ENCODE measurements at regions of chr10 and their contacts with region 1.

Region 1: DNA sequence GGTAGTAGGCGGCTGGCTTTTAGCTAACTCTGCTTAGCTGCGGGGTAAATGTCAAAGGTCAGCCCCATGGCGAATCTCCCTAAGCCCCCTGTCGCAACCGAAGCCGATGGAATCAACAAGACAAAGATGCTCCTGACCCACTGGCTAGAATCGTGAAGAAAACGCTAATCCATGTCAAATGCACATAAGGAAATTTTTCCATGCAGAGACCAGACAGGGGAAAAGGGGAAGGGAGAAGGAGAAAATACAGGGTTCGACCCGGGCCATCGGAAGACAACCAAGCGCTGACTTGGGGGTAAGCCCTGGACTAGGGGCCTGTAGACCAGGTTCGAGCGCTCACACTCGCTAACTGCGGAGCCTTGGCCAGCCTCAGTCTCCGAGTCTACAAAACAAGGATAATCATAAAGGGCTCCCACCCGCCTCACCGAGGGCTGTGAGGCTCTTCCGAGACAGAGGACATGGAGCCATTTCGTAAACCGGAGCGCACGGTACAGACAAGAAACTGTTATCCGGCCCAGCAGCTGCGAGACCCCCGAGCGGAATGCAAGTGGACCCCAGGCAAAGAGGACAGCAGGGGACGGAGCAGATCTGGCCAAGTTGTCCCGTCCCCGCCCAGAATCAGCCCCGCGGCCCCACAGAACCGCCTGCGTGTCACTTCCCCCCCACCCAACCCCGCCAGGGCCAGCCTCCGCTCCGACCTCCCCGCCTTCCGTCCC is 507 bp downstream of the SAR1A start:
- DNase-seq: peak; percentile 38
- ATAC-seq: peak; percentile 11
- H3K4me3 Mint-ChIP-seq: peak overlapping the region; percentile 86
- H3K27ac Mint-ChIP-seq: peak overlapping the region; percentile 99
- H3K4me1 Mint-ChIP-seq: peaks cover 65% of the 10 kb centered on the region
- H3K27me3 Mint-ChIP-seq: no peaks in the 10 kb centered on the region

Region 2: DNA sequence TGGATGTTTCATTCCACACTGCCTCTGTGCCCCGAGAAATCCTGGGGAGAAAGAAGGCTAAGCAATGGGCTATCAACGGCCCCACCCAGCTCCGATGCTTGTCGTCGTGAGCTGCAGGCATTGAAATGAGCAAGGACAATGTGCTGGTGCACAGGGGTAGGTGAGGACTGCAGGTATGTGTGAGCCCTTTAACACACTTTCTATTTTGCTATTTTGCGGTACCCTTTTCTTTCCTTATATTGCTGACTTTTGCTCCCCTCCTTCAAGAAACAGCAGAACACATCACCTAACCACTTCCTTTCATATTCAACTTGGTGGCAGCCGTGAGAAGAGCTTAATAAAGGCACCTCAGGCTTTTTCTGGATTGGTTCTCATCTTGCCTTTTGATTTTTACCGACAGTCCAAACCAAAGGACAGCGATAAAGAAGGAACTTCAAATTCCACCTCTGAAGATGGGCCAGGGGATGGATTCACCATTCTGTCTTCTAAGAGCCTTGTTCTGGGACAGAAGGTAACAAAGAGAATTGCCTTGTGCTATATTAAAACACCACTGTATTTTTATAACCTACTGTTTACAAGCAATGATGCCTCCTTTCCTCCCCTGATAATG is 76.4 kb before region 1 on chr10:
- CTCF ChIA-PET with region 1: no interaction called
- POLR2A ChIA-PET with region 1: interaction called, 13 read pairs
- DNase-seq: peak; percentile 63
- ATAC-seq: peak; percentile 80
- H3K4me3 Mint-ChIP-seq: peak overlapping the region; percentile 78
- H3K27ac Mint-ChIP-seq: peak overlapping the region; percentile 86
- H3K4me1 Mint-ChIP-seq: peaks cover 46% of the 10 kb centered on the region
- H3K27me3 Mint-ChIP-seq: no peaks in the 10 kb centered on the region

Region 3: GRCh38 chr10:70197235-70197945 is 27.6 kb after region 1 on chr10:
- CTCF ChIA-PET with region 1: interaction called, 12 read pairs
- POLR2A ChIA-PET with region 1: interaction called, 9 read pairs
- DNase-seq: peak; percentile 71
- ATAC-seq: peak; percentile 79
- H3K4me3 Mint-ChIP-seq: peak overlapping the region; percentile 25
- H3K27ac Mint-ChIP-seq: peak overlapping the region; percentile 79
- H3K4me1 Mint-ChIP-seq: peaks cover 47% of the 10 kb centered on the region
- H3K27me3 Mint-ChIP-seq: no peaks in the 10 kb centered on the region